ENCODE measurements at regions of chr1 and their contacts with region 1.

Region 1: GRCh38 chr1:114716304-114717170 is at the start of gene NRAS:
- DNase-seq: peak; percentile 98
- H3K4me3 ChIP-seq: peak within 1 kb of the TSS; percentile 73 to 88 (median 78)
- H3K27ac ChIP-seq: peak within 1 kb of the TSS; percentile 89 to 95 (median 92)
- H3K4me1 ChIP-seq: peaks cover 17 to 57% (median 35%) of the 10 kb centered on the region in 6 donors
- H3K27me3 ChIP-seq: no peaks in the 10 kb centered on the region
- CTCF ChIP-seq: peak in 1 of 11 experiments; percentile 15
- POLR2A ChIP-seq: peak in 1 of 3 donors; percentile 21
- total RNA-seq, gene NRAS: 27.0 to 45.3 (median 32.5) TPM

Region 2: DNA sequence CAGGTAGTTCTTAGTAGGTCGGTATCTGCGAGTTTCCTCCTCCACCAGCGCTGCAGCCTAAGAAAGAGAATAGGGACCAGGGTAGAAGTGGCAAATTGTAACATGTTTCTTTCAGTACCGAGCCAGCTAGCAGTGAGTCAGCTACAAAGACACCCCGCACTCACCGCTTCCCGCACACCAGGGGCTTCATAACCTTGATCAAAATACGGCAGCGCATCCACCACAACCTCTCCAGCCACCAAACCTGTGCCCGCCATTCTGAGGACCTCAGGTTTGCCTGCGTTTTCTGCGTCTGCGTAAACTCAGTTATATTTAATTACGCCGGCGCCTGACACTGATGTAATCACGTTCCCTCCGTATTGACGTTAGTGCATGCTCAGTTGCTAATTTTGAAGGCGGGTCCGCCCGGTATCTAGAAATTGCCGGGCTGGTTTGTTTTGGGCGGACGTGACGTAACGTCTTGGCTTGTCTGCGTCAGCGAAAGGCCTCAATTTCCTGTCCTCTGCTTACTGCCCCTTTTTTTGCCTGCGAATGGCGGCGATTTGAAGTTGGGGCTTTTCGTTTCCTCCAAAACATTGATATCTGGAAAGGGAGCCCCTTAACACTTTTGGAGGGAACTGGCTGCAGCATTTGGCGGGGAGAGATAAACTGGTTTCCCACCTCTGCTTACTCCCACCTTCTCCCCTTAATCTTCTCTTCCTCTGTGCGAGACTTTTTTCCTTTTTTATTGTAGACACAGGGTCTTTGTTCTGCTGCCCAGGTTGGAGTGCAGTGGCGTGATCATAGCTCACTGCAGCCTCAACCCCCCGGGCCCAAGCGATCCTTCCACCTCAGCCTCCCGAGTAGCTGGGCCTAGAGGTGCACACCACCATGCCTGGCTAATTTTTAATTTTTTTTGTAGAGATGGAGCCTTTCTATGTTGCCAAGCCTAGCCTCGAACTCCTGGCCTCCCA is 134.9 kb before region 1 on chr1 and contains the start of gene BCAS2:
- intact Hi-C with region 1: loop called (anchors 10 kb)
- DNase-seq: peak; percentile 97
- H3K4me3 ChIP-seq: peak within 1 kb of the TSS; percentile 40 to 80 (median 58)
- H3K27ac ChIP-seq: peak within 1 kb of the TSS; percentile 88 to 94 (median 90)
- H3K4me1 ChIP-seq: peaks cover 18 to 50% (median 42%) of the 10 kb centered on the region in 6 donors
- H3K27me3 ChIP-seq: no peaks in the 10 kb centered on the region
- CTCF ChIP-seq: peak in 1 of 11 experiments; percentile 25
- POLR2A ChIP-seq: peak; percentile 22 to 93 (median 71)
- total RNA-seq, gene BCAS2: 20.3 to 29.7 (median 28.4) TPM

Region 3: DNA sequence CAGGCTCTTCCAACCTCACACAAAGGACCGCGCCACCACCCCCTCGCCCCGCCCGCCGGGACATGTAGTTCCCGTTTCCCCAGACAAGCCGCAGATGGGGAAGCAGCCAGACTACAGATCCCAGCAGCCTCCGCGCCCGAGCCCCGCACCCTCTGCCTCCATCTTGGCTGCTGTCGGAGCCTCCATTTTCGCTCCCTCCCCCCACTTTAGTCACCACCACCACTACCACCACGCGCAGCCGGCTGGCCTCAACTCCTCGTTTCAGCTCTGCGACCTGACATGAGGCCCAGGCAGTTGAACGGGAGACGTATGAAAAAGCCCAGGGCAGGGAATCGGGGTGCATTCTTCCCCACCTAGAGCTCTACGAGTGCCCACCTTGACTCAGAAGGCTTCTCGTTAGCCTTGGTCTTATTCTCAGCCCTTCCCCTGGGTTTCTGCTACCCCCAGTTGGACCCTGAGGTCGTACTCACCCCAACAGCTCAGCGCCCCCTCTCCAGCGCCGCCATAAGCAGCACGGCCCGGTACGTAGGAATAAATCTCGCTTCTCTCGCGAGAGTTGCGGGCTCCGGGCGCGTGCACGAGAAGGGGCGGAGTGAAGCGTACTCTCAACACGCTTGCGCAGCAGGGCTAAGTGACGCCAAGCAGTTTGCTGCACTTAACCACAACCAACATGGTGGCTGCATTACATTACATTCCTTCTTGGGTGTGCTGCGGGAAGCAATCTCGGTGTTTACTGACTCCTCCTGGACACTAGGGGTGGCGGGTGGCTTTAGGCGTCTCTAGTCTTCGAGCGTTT is 41.1 kb after region 1 on chr1 and contains the start of gene CSDE1:
- intact Hi-C with region 1: loop called (anchors 5 kb)
- DNase-seq: peak; percentile 99
- H3K4me3 ChIP-seq: peak within 1 kb of the TSS; percentile 61 to 84 (median 80)
- H3K27ac ChIP-seq: peak within 1 kb of the TSS; percentile 98 to 100 (median 100)
- H3K4me1 ChIP-seq: peaks cover 41 to 54% (median 51%) of the 10 kb centered on the region in 6 donors
- H3K27me3 ChIP-seq: no peaks in the 10 kb centered on the region
- CTCF ChIP-seq: peak in 8 of 11 experiments; percentile 14 to 50 (median 40)
- POLR2A ChIP-seq: peak; percentile 65 to 79 (median 73)
- total RNA-seq, gene CSDE1: 407 to 1,126 (median 475) TPM

Region 4: DNA sequence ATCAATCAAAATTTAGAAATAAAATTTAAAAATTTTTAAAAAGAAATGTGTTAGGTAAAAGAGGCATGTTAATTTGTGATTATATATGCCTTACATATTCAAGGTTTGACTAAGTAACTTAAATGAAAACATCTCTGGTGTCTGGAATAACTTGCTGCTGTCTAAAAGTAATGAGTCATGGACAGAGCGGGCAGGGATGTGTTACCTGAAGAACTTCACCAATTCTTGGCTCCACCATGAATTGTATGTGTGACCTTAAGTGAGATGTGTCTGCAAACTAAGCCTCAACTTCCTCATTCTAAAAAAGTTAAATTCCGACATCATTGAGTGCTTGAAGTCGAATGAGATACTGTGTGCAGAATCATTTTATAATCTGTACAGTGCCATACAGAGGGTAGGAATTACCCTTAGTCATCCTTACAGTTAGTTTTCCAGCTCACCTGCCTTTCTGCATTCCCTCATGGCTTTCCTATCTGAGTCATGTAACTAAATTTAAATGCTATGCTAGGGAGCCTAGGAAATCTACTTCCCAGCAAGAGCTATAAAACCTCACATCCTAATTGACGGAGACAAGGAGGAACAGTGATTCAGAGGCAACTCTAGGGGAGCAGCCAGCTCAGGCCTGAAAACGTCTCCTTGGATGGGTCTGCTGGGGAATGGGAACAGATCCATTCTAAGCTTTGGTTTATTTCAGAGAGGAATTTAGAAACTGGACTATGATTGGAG is 473.4 kb after region 1 on chr1:
- intact Hi-C with region 1: no loop called
- DNase-seq: no peak
- H3K4me3 ChIP-seq: no peak overlapping the region
- H3K27ac ChIP-seq: no peak overlapping the region
- H3K4me1 ChIP-seq: no peaks in the 10 kb centered on the region
- H3K27me3 ChIP-seq: peaks cover 0 to 5% (median 0%) of the 10 kb centered on the region in 7 donors
- CTCF ChIP-seq: no peak
- POLR2A ChIP-seq: no peak

Region 5: DNA sequence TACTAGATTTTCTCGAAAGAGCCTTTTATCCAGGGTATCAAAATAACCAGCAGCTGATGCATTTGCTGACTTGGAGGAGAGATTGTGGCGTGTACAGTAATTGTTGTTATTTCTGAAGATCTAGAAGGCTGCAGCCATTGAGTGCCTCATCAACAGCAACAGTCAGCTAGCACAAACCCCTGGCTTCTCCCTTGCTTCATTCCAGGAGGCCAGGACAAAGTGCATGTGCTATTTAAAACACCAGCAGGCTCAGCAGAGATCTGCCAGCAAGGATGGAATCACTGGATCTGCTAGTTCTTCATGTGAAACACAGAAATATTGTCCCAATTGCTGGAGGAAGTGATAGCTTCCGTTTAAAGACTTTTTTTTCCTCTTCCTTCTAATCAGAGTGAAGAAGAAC is 624.3 kb after region 1 on chr1:
- intact Hi-C with region 1: no loop called
- DNase-seq: no peak
- H3K4me3 ChIP-seq: no peak overlapping the region
- H3K27ac ChIP-seq: no peak overlapping the region
- H3K4me1 ChIP-seq: peaks cover 0 to 33% (median 15%) of the 10 kb centered on the region in 6 donors
- H3K27me3 ChIP-seq: peaks cover 0 to 49% (median 21%) of the 10 kb centered on the region in 7 donors
- CTCF ChIP-seq: no peak
- POLR2A ChIP-seq: no peak